Caco-2 (cell line): ENCODE measurements at regions of chr20 and their contacts with region 1.

Region 1: DNA sequence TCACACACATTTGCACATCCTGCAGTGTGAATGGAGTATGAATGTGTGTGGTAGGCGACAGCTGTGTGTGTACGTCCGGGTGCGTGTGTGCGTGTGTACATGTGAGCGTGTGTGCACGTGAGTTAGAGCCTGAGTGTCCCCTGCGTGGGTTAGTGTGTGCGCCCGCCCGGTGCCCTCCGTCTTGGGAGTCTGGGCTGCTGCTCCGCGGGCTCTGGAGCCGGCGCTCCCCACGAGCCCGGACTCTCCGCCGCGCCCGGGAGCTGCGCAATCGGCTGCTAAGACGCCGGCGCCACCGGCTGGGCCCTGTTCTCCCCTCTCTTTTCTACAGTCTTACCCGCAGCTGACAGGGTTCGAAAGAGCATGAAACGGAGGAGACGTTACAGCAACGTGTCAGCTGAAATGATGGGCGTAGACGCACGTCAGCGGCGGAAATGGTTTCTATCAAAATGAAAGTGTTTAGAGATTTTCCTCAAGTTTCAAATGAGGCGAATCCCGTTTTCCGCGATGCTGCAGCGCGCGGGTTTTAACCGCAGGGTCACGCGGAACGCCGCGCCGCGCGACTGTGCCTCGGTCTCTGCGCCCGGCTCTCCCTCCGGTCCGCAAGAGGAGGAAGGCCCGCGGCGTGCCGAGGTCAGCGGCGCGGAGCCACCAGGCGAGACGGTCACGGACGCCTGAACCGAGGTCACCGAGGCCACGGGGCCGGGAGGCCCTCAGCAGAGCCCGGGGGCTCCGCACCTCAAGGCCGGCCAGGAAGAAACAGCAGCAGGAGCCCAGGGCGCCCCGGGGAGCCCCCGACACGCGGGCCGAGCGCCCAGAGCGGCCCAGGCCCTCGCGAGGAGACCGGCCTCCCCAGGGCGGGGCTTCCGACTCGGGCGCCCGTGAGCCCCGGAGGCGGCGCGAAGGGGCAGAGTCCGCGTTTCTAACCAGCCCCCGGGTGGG is 95.3 kb upstream of the BHLHE23 start:
- DNase-seq: peak; percentile 50 to 60
- H3K4me3 ChIP-seq: peak overlapping the region; percentile 54
- H3K4me3 Mint-ChIP-seq: peak overlapping the region; percentile 64
- H3K27ac Mint-ChIP-seq: no peak overlapping the region
- H3K4me1 ChIP-seq: 0 out of 2 replicates have a peak, but pooled peaks cover 3% of the 10 kb centered on the region
- H3K4me1 Mint-ChIP-seq: no peaks in the 10 kb centered on the region
- H3K27me3 ChIP-seq: peaks cover 4% of the 10 kb centered on the region
- H3K27me3 Mint-ChIP-seq: peaks cover 9% of the 10 kb centered on the region
- CTCF ChIP-seq: no peak

Region 2: DNA sequence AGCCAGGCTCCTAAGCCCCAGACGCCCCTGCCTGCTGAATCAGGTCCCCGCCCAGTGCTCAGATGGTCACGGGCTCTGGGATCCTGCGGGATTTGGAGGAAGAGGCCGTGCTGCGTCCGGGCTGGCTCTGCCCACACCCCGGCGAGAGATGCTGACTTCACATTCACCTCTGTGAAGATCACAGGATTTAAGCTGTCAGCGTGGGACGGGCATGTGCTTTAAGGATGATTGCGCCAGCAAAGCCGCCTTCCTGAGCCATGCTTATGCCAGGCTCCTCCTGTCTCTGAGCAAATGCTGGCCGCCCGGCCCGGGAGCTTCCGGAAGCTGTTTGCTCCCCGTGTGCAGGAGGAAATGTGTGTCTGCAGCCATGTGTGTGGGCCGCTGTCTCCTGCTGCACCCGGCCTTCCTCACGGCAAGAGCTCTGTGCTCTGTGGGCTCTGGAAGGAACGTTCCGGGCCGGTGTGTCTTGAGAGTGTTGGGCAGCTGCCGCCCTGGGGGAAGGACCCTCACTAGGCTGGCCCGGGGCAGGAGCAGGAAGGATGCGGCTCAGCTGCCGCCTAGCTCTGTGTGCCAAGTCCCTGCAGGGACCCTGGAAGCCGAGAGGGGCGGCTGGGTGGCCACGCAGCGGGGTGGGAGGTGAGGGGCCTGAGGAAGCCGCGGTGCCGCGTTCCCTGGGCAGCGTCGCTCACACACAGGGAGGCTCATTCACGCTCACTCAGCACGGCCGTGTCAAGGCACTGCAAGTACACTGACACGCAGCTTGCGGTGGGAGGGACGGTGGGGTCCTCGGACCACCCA is 76.3 kb before region 1 on chr20:
- CTCF ChIA-PET with region 1: no interaction called
- POLR2A ChIA-PET with region 1: no interaction called
- intact Hi-C with region 1: no loop called
- DNase-seq: peak in 1 of 2 experiments; percentile 42
- H3K4me3 ChIP-seq: no peak overlapping the region
- H3K4me3 Mint-ChIP-seq: no peak overlapping the region
- H3K27ac Mint-ChIP-seq: peak overlapping the region; percentile 4
- H3K4me1 ChIP-seq: peaks cover 22% of the 10 kb centered on the region
- H3K4me1 Mint-ChIP-seq: peaks cover 17% of the 10 kb centered on the region
- H3K27me3 ChIP-seq: no peaks in the 10 kb centered on the region
- H3K27me3 Mint-ChIP-seq: no peaks in the 10 kb centered on the region
- CTCF ChIP-seq: no peak

Region 3: DNA sequence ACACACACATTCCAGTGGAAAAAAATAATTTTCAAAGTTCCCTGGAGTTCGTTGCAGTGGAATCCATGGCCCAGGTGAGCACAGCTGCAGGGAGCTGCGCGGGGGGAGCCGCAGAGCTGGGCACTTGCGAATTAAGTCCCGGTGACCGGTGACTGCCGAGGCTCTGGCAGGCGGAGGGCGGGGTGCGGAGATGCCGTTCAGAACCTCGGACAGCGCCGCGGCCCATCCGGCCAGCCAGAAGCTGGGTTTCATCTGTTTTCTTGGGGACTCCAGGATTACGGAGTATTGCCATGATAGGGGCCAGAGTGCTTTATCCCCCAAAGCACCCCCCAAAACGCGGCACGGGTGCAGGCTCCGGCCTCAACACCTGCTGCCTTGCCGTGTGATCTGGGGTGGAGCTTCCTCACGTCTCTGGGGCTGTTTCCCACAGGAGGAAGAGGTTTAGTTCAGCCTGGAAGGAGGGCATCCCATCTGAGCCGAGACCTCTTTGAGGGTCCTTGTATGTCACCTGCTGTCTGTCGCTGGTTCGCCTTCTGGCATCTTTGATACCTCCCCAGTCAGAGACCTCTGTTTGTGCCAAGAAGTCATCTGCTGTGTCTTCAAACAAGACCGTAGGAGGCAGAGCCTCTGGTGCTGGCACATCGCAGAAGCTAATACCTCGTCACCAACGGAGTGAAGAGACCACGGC is 14.5 kb after region 1 on chr20:
- CTCF ChIA-PET with region 1: no interaction called
- POLR2A ChIA-PET with region 1: no interaction called
- intact Hi-C with region 1: no loop called
- DNase-seq: peak; percentile 49 to 78
- H3K4me3 ChIP-seq: no peak overlapping the region
- H3K4me3 Mint-ChIP-seq: no peak overlapping the region
- H3K27ac Mint-ChIP-seq: no peak overlapping the region
- H3K4me1 ChIP-seq: no peaks in the 10 kb centered on the region
- H3K4me1 Mint-ChIP-seq: no peaks in the 10 kb centered on the region
- H3K27me3 ChIP-seq: peaks cover 3% of the 10 kb centered on the region; the same call in 1 of the 2 replicates
- H3K27me3 Mint-ChIP-seq: peaks cover 57% of the 10 kb centered on the region
- CTCF ChIP-seq: no peak

Region 4: GRCh38 chr20:63156221-63156671 is 54.2 kb after region 1 on chr20:
- CTCF ChIA-PET with region 1: no interaction called
- POLR2A ChIA-PET with region 1: no interaction called
- intact Hi-C with region 1: loop called (anchors 5 kb)
- DNase-seq: peak in 1 of 2 experiments; percentile 31
- H3K4me3 ChIP-seq: no peak overlapping the region
- H3K4me3 Mint-ChIP-seq: no peak overlapping the region
- H3K27ac Mint-ChIP-seq: no peak overlapping the region
- H3K4me1 ChIP-seq: peaks cover 7% of the 10 kb centered on the region; the same call in 1 of the 2 replicates
- H3K4me1 Mint-ChIP-seq: no peaks in the 10 kb centered on the region
- H3K27me3 ChIP-seq: peaks cover 8% of the 10 kb centered on the region
- H3K27me3 Mint-ChIP-seq: peaks cover 26% of the 10 kb centered on the region
- CTCF ChIP-seq: no peak